Adrenal gland (tissue), 19 donors: ENCODE measurements at regions of chr22 and their contacts with region 1.

Region 1: GRCh38 chr22:20090348-20091240 is 10.6 kb downstream of the DGCR8 start:
- DNase-seq: no peak
- H3K4me3 ChIP-seq: no peak overlapping the region
- H3K27ac ChIP-seq: no peak overlapping the region
- H3K4me1 ChIP-seq: no peaks in the 10 kb centered on the region
- H3K27me3 ChIP-seq: no peaks in the 10 kb centered on the region
- CTCF ChIP-seq: no peak
- POLR2A ChIP-seq: no peak

Region 2: GRCh38 chr22:20016734-20017621 is 73.6 kb before region 1 on chr22 and contains the start of gene ARVCF:
- intact Hi-C with region 1: loop called in 1 of 2 experiments (anchors 10 kb)
- DNase-seq: peak; percentile 89 to 96 (median 93)
- H3K4me3 ChIP-seq: peak within 1 kb of the TSS in 2 of 4 donors; percentile 46 to 85
- H3K27ac ChIP-seq: peak within 1 kb of the TSS in 2 of 5 donors; percentile 23
- H3K4me1 ChIP-seq: peaks cover 13 to 23% of the 10 kb centered on the region in 2 donors
- H3K27me3 ChIP-seq: no peaks in the 10 kb centered on the region
- CTCF ChIP-seq: peak in 5 of 6 experiments; percentile 19 to 43 (median 29)
- POLR2A ChIP-seq: no peak
- total RNA-seq, gene ARVCF: 8.4 to 46.1 (median 18.4) TPM

Region 3: GRCh38 chr22:20027966-20028854 is 62.4 kb before region 1 on chr22:
- intact Hi-C with region 1: no loop called
- DNase-seq: no peak
- H3K4me3 ChIP-seq: no peak overlapping the region
- H3K27ac ChIP-seq: no peak overlapping the region
- H3K4me1 ChIP-seq: peaks cover 12 to 33% of the 10 kb centered on the region in 2 donors
- H3K27me3 ChIP-seq: no peaks in the 10 kb centered on the region
- CTCF ChIP-seq: peak in 4 of 6 experiments; percentile 8 to 39 (median 28)
- POLR2A ChIP-seq: no peak